T-cell (primary cell): ENCODE measurements at regions of chr7 and their contacts with region 1.

Region 1: GRCh38 chr7:32846701-32847100 is 44.9 kb downstream of the KBTBD2 start:
- DNase-seq: peak; percentile 60 to 94 (median 86)
- ATAC-seq: peak; percentile 99 to 100 (median 100)
- H3K4me3 ChIP-seq: no peak overlapping the region
- H3K4me3 Mint-ChIP-seq: no peak overlapping the region
- H3K27ac ChIP-seq: no peak overlapping the region
- H3K27ac Mint-ChIP-seq: peak overlapping the region in 1 of 2 donors; percentile 3
- H3K4me1 ChIP-seq: peaks cover 0 to 3% of the 10 kb centered on the region in 2 experiments
- H3K4me1 Mint-ChIP-seq: peaks cover 5 to 11% (median 11%) of the 10 kb centered on the region in 3 donors
- H3K27me3 ChIP-seq: peaks cover 0 to 4% of the 10 kb centered on the region in 2 experiments
- H3K27me3 Mint-ChIP-seq: peaks cover 22 to 25% of the 10 kb centered on the region in 2 donors

Region 2: DNA sequence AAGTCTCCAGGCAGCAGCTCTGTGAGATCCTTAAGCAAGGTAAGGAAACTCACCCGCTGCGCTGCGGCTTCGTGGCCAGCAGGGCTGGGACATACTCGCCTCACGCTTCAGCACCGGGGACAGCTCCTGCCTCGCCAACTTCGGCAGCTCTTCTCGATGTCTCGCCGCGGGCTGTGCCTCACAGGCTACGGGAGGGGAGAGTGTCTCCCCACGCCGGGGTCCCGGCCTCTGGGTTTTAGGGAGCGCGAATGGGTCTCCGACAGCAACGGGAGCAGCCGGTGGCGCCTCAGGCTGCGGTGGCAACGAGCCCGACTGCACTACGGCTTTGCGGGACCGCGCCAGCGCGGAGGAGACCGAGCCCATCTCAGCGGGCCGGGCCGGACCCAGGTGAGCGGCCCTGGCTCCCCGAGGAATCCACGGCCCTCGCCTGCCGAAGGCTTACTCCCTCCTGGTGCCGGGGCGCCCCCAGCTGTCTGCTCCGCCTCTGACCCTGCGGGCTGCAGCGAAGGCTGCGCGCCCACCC is 418.9 kb before region 1 on chr7:
- CTCF ChIA-PET with region 1: no interaction called
- POLR2A ChIA-PET with region 1: no interaction called
- DNase-seq: peak; percentile 7 to 67 (median 44)
- ATAC-seq: peak in 3 of 4 experiments; percentile 45 to 63 (median 45)
- H3K4me3 ChIP-seq: no peak overlapping the region
- H3K4me3 Mint-ChIP-seq: no peak overlapping the region
- H3K27ac ChIP-seq: no peak overlapping the region
- H3K27ac Mint-ChIP-seq: no peak overlapping the region
- H3K4me1 ChIP-seq: no peaks in the 10 kb centered on the region
- H3K4me1 Mint-ChIP-seq: no peaks in the 10 kb centered on the region
- H3K27me3 ChIP-seq: peaks cover 10 to 41% of the 10 kb centered on the region in 2 experiments
- H3K27me3 Mint-ChIP-seq: peaks cover 61% of the 10 kb centered on the region in 2 donors

Region 3: GRCh38 chr7:32891800-32892520 is 45.3 kb after region 1 on chr7:
- CTCF ChIA-PET with region 1: interaction called, 12 to 25 read pairs
- POLR2A ChIA-PET with region 1: interaction called in 1 of 2 experiments, 7 read pairs
- DNase-seq: peak; percentile 93 to 98 (median 97)
- ATAC-seq: peak; percentile 63 to 74 (median 70)
- H3K4me3 ChIP-seq: peak overlapping the region; percentile 65 to 89
- H3K4me3 Mint-ChIP-seq: peak overlapping the region; percentile 84 to 98 (median 92)
- H3K27ac ChIP-seq: peak overlapping the region; percentile 98
- H3K27ac Mint-ChIP-seq: peak overlapping the region; percentile 97 to 98
- H3K4me1 ChIP-seq: peaks cover 27% of the 10 kb centered on the region in 2 experiments
- H3K4me1 Mint-ChIP-seq: peaks cover 47 to 58% (median 54%) of the 10 kb centered on the region in 3 donors
- H3K27me3 ChIP-seq: no peaks in the 10 kb centered on the region
- H3K27me3 Mint-ChIP-seq: peaks cover 0 to 4% of the 10 kb centered on the region in 2 donors

Region 4: DNA sequence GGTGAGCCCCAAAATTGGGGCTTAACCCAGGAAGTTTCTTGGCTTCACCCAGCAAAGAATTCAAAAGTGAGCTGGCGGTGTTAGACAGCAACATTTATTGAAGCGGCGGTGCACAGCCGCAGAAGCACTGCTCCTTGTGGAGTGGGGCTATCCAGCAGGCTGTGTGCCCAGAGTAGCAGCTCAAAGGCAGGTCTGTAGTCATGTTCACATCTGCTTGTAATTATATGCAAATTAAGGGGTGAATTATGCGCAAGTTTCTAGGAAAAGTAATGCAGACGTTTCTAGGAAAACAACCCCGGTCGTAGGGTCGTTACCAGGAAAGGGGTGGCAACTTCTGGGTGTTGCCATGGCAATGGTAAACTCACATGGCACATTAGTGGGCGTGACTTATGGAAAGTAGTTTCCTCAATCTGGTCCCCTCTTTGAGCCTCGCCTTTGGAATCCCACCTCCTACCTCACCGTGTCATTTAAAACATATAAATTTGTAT is 58.5 kb after region 1 on chr7:
- CTCF ChIA-PET with region 1: interaction called, 10 read pairs
- POLR2A ChIA-PET with region 1: interaction called in 1 of 2 experiments, 3 read pairs
- DNase-seq: peak; percentile 18 to 86 (median 63)
- ATAC-seq: peak; percentile 87 to 92 (median 88)
- H3K4me3 ChIP-seq: peak overlapping the region; percentile 31 to 66
- H3K4me3 Mint-ChIP-seq: peak overlapping the region; percentile 75 to 79 (median 77)
- H3K27ac ChIP-seq: peak overlapping the region; percentile 82
- H3K27ac Mint-ChIP-seq: peak overlapping the region; percentile 91 to 94
- H3K4me1 ChIP-seq: peaks cover 4 to 25% of the 10 kb centered on the region in 2 experiments
- H3K4me1 Mint-ChIP-seq: peaks cover 15 to 18% (median 18%) of the 10 kb centered on the region in 3 donors
- H3K27me3 ChIP-seq: no peaks in the 10 kb centered on the region
- H3K27me3 Mint-ChIP-seq: no peaks in the 10 kb centered on the region

Region 5: DNA sequence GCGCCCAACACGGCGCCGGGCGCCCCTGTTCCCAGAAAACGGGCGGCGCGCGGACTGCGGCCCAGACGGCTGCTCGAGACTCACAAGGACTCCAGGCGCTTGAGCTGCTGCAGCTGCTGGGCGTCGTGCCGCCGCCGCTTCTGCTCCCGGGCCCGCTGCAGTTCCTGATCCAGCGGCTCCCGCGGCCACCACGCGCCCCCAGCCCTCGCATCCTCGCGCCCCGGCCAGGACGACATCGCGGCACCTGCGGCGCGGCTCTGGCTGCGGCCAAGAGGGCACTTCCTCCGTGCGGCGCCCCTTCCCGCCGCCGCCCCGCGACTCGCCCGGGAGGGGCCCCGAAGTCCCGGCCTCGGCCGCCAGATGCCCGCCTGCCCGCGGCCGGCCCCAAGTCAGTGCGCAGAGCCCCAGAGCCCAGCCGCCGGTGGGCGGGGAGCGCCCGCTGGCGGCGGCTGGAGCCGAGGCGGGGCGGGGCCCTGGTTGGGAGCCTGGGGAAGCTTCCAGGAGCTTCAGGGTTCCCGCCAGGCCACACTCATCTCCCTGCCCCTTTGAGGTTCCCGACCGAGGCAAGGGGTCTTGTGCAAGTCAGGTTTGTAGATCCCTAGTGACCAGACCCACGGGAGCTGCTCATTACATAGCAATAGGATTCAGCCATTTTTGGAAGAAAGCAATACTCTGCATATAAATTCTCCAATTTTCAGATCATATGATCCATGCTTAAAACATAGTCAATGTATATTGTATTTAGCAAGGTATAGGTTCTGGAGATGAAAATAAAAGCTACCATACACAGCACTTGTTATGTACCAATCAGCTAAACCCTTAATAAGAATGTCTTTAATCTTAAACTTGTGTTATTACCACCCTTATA is 96.3 kb after region 1 on chr7:
- CTCF ChIA-PET with region 1: interaction called, 47 to 74 read pairs
- POLR2A ChIA-PET with region 1: no interaction called
- DNase-seq: peak; percentile 21 to 78 (median 45)
- ATAC-seq: peak; percentile 91 to 93 (median 93)
- H3K4me3 ChIP-seq: peak overlapping the region; percentile 52 to 55
- H3K4me3 Mint-ChIP-seq: peak overlapping the region; percentile 76 to 84 (median 79)
- H3K27ac ChIP-seq: no peak overlapping the region
- H3K27ac Mint-ChIP-seq: no peak overlapping the region
- H3K4me1 ChIP-seq: peaks cover 0 to 14% of the 10 kb centered on the region in 2 experiments
- H3K4me1 Mint-ChIP-seq: peaks cover 11 to 17% (median 16%) of the 10 kb centered on the region in 3 donors
- H3K27me3 ChIP-seq: peaks cover 0 to 10% of the 10 kb centered on the region in 2 experiments
- H3K27me3 Mint-ChIP-seq: peaks cover 2 to 4% of the 10 kb centered on the region in 2 donors

Region 6: DNA sequence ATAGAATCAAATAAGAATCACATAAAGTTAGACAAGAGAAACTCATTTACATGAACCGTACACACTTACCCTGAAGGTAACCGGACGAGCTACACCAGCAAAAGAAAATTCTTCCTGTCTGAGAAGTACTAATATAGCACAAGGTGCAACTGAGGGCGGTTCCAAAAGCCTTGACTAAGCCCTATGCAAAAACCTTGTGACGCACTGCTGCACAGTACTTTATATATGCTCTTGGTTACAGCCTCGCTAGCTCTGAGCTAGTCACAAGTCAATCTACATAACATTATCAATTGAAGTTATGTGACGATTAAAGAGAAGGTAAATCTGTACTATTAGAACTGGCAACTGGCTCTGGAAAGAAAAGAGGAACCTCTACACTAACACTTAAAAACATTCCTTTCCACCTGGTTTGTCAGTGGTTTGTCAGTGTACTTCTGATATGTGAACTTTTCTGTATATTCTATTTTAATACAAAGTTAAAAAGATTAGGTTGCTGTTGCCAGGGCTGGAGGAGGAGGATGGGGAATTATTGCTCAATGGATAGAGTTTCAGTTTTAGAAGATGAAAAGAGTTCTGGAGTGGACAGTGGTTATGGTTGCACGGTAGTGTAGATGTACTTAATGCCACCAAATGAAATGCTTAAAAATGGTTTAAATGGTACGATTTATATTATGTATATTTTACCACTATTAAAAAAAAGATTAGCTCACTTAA is 194.3 kb after region 1 on chr7:
- CTCF ChIA-PET with region 1: interaction called in 1 of 2 experiments, 12 read pairs
- POLR2A ChIA-PET with region 1: no interaction called
- DNase-seq: peak; percentile 10 to 85 (median 68)
- ATAC-seq: peak; percentile 99 to 100 (median 100)
- H3K4me3 ChIP-seq: no peak overlapping the region
- H3K4me3 Mint-ChIP-seq: peak overlapping the region; percentile 72 to 79 (median 78)
- H3K27ac ChIP-seq: peak overlapping the region; percentile 75
- H3K27ac Mint-ChIP-seq: peak overlapping the region; percentile 91 to 92
- H3K4me1 ChIP-seq: peaks cover 6 to 19% of the 10 kb centered on the region in 2 experiments
- H3K4me1 Mint-ChIP-seq: peaks cover 64 to 66% (median 66%) of the 10 kb centered on the region in 3 donors
- H3K27me3 ChIP-seq: no peaks in the 10 kb centered on the region
- H3K27me3 Mint-ChIP-seq: no peaks in the 10 kb centered on the region

Region 7: GRCh38 chr7:33050535-33051318 is 204.0 kb after region 1 on chr7:
- CTCF ChIA-PET with region 1: interaction called, 4 to 16 read pairs
- POLR2A ChIA-PET with region 1: interaction called in 1 of 2 experiments, 3 read pairs
- DNase-seq: peak in 19 of 35 experiments; percentile 2 to 74 (median 17)
- ATAC-seq: peak in 3 of 4 experiments; percentile 52 to 74 (median 62)
- H3K4me3 ChIP-seq: no peak overlapping the region
- H3K4me3 Mint-ChIP-seq: no peak overlapping the region
- H3K27ac ChIP-seq: no peak overlapping the region
- H3K27ac Mint-ChIP-seq: peak overlapping the region; percentile 38 to 41
- H3K4me1 ChIP-seq: peaks cover 9 to 27% of the 10 kb centered on the region in 2 experiments
- H3K4me1 Mint-ChIP-seq: peaks cover 53 to 71% (median 63%) of the 10 kb centered on the region in 3 donors
- H3K27me3 ChIP-seq: no peaks in the 10 kb centered on the region
- H3K27me3 Mint-ChIP-seq: no peaks in the 10 kb centered on the region

Region 8: GRCh38 chr7:33109005-33109757 is 262.5 kb after region 1 on chr7 and contains the start of gene RP9:
- CTCF ChIA-PET with region 1: interaction called, 18 to 20 read pairs
- POLR2A ChIA-PET with region 1: no interaction called
- DNase-seq: peak; percentile 49 to 88 (median 69)
- ATAC-seq: peak; percentile 91 to 95 (median 94)
- H3K4me3 ChIP-seq: peak within 1 kb of the TSS; percentile 71 to 83
- H3K4me3 Mint-ChIP-seq: peak within 1 kb of the TSS; percentile 80 to 89 (median 83)
- H3K27ac ChIP-seq: peak within 1 kb of the TSS; percentile 36
- H3K27ac Mint-ChIP-seq: peak within 1 kb of the TSS; percentile 50 to 69
- H3K4me1 ChIP-seq: peaks cover 18 to 29% of the 10 kb centered on the region in 2 experiments
- H3K4me1 Mint-ChIP-seq: peaks cover 38 to 47% (median 45%) of the 10 kb centered on the region in 3 donors
- H3K27me3 ChIP-seq: peaks cover 0 to 2% of the 10 kb centered on the region in 2 experiments
- H3K27me3 Mint-ChIP-seq: peaks cover 5 to 16% of the 10 kb centered on the region in 2 donors
- total RNA-seq, gene RP9: 14.7 to 18.3 (median 17.0) TPM